ENCODE measurements at regions of chrX and their contacts with region 1.

Region 1: DNA sequence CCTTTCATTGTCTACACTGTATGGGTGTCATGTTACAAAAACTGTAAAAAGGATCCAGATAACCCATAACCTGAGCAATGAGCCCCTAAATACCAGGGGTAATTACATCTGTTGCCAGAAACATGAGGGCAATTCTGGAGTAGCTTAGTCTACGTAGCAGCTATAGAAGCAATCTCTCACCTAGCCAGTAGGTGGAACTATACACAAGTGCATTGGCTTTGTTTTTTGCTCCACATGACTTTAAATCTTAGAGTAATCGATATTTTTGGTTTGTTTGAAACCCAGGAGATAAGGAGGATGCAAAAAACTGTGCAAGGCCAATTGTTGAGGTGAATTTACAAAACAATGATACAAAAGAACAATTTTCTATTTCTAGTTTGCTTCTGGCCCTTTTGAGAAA is 57.5 kb downstream of the GPR82 start:
- DNase-seq: no peak
- H3K4me3 Mint-ChIP-seq: no peak overlapping the region
- H3K27ac Mint-ChIP-seq: no peak overlapping the region
- H3K4me1 Mint-ChIP-seq: no peaks in the 10 kb centered on the region
- H3K27me3 Mint-ChIP-seq: no peaks in the 10 kb centered on the region

Region 2: DNA sequence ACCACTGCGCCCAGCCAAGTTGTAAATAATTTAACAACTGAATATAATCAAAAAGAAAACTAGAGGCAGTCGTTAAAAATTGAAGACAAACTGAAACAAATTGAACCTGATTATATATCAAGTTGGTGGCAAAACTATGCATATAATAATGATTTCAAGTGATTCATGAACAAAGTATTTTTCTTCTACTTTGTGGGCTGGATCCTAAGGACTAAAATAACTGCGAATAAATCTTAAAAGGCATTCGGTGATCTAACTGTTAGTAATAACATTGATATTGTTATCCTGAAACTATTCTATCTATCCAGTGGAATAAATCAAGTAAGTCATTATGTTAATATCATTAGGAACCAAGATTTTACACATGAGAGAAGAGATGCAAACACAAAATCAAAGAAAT is 717.5 kb before region 1 on chrX:
- intact Hi-C with region 1: no loop called
- DNase-seq: no peak
- H3K4me3 Mint-ChIP-seq: no peak overlapping the region
- H3K27ac Mint-ChIP-seq: no peak overlapping the region
- H3K4me1 Mint-ChIP-seq: no peaks in the 10 kb centered on the region
- H3K27me3 Mint-ChIP-seq: peaks cover 2% of the 10 kb centered on the region

Region 3: GRCh38 chrX:41322821-41323603 is 458.5 kb before region 1 on chrX:
- intact Hi-C with region 1: no loop called
- DNase-seq: no peak
- H3K4me3 Mint-ChIP-seq: no peak overlapping the region
- H3K27ac Mint-ChIP-seq: no peak overlapping the region
- H3K4me1 Mint-ChIP-seq: no peaks in the 10 kb centered on the region
- H3K27me3 Mint-ChIP-seq: no peaks in the 10 kb centered on the region

Region 4: GRCh38 chrX:43333543-43333942 is 1552.0 kb after region 1 on chrX:
- intact Hi-C with region 1: loop called (anchors 10 kb)
- DNase-seq: no peak
- H3K4me3 Mint-ChIP-seq: no peak overlapping the region
- H3K27ac Mint-ChIP-seq: no peak overlapping the region
- H3K4me1 Mint-ChIP-seq: no peaks in the 10 kb centered on the region
- H3K27me3 Mint-ChIP-seq: no peaks in the 10 kb centered on the region

Region 5: GRCh38 chrX:43557792-43558191 is 1776.3 kb after region 1 on chrX:
- intact Hi-C with region 1: loop called (anchors 1 kb)
- DNase-seq: peak; percentile 20
- H3K4me3 Mint-ChIP-seq: no peak overlapping the region
- H3K27ac Mint-ChIP-seq: no peak overlapping the region
- H3K4me1 Mint-ChIP-seq: no peaks in the 10 kb centered on the region
- H3K27me3 Mint-ChIP-seq: peaks cover 4% of the 10 kb centered on the region

Region 6: DNA sequence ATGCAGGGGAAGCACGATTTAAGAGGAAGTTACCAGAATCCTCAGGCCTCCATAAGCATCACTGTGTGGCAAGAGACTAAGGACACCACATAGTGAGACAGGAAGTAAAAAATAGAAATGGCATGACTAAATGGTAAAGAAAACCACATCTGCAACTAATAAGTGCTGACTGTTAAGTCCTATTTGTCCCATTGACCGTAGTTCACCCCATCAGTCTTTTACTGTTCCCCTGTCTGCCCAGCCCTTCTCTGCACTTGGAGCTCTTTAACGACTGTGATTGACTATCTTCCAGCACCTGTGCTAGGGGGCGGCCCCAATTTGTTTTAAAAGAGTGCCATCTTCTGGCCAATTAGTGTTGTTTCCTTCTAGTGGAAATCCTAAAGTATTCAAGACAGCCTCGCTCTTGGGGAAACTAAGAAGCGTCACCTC is 1968.8 kb after region 1 on chrX:
- intact Hi-C with region 1: loop called (anchors 2 kb)
- DNase-seq: peak; percentile 3
- H3K4me3 Mint-ChIP-seq: no peak overlapping the region
- H3K27ac Mint-ChIP-seq: no peak overlapping the region
- H3K4me1 Mint-ChIP-seq: peaks cover 4% of the 10 kb centered on the region
- H3K27me3 Mint-ChIP-seq: peaks cover 1% of the 10 kb centered on the region

Measured in activated T-helper 1 cell treated with anti-CD3 and anti-CD28 coated beads, Interleukin-12 subunit alpha, Interleukin-12 subunit beta, Interleukin-2, Interleukin-4 antibody, amounts not matched to agents 30 ng/mL and 10 ng/mL and 1 ng/mL, durations not matched to agents 14 hours and 24 hours and 36 hours (primary cell).